ENCODE measurements at regions of chrX and their contacts with region 1.

Region 1: GRCh38 chrX:106481341-106481740 is 130.4 kb upstream of the RADX start:
- DNase-seq: no peak
- ATAC-seq: peak; percentile 45 to 61
- H3K4me3 ChIP-seq: no peak overlapping the region
- H3K27ac ChIP-seq: no peak overlapping the region
- H3K4me1 ChIP-seq: no peaks in the 10 kb centered on the region
- H3K27me3 ChIP-seq: no peaks in the 10 kb centered on the region

Region 2: DNA sequence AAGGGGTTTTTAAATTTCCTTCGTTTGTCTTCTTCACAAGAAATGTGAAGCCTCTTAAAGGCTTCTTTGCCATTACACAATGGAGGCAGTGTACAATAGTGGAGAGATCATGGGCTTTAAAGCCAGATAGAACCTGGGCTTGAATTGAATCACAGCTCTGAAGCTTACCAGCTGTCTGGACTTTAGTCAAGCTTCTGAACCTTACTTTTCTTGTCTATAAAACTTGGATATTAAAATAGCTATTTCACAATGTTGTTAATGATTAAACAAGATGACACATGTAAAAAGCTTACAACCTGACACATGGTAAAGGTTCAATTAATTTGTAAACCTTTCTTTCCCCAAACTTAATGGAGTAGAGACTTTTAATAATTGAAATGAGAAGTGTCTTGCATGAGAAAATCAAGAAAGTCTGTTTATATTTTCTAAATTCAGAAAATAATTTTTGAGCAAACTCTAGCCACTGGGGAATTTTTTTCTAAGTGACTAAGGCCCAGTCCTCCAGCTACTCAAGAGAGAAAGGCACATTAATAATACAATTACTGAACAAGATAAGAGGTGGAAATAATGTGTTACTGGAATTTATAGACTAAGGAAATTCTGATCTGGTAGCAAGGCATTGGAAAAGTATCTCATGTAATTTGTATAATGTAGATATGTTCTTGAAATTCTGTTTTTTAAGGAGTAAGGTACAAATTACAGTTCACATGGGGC is 299.5 kb after region 1 on chrX:
- intact Hi-C with region 1: loop called in 1 of 4 experiments (anchors 10 kb)
- DNase-seq: no peak
- ATAC-seq: no peak
- H3K4me3 ChIP-seq: no peak overlapping the region
- H3K27ac ChIP-seq: no peak overlapping the region
- H3K4me1 ChIP-seq: no peaks in the 10 kb centered on the region
- H3K27me3 ChIP-seq: no peaks in the 10 kb centered on the region

Region 3: GRCh38 chrX:106791495-106791894 is 310.2 kb after region 1 on chrX:
- intact Hi-C with region 1: loop called in 3 of 4 experiments (anchors 10 kb)
- DNase-seq: no peak
- ATAC-seq: no peak
- H3K4me3 ChIP-seq: no peak overlapping the region
- H3K27ac ChIP-seq: no peak overlapping the region
- H3K4me1 ChIP-seq: no peaks in the 10 kb centered on the region
- H3K27me3 ChIP-seq: no peaks in the 10 kb centered on the region